ENCODE measurements at regions of chr2 and their contacts with region 1.

Region 1: DNA sequence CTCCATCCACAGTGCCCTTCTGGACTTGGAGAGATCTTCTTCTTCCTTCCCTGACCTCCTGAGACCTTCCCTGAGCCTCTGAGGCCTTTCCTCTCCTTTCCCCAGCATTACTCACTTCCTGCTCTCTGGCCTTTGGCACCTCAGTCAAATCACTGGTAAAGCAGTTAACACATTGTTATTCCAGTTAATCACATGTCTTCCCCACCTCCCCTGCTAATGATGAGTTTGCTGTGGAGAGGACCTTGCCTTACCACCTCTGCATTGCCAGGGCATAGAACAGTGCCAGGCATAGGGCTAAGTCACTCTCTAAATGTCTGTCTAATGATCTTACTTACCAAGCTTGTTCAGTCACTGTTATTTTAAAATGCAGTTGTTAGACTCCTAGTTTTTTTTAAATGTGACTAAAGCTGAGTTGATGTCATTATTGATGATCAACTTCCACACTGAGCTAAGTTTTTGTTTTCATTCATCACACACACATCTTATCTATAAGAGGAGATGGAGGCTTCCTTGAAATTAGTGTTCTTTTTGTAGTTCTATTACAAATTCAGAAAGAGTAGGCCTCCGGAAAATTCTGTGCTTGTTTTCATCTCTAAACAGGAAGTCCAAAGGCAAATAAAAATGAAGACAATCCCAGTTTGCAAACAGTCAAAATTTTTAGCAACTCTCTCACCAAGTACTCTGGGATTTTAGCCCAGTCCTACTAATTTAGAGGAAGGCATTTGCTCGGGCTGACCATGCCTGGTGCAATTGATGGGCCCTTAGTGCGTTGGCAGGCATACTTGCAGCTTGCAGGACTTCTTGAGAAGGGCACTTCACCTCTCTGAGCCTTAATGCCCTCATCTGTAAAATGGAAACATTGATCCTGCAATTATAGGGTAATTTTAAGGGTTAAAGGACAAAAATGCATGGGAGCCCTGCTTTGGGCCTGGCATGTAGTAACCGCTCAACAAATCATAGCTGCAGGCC is 113.7 kb upstream of the SPRED2 start:
- DNase-seq: no peak
- ATAC-seq: peak in 1 of 4 donors; percentile 61
- H3K4me3 ChIP-seq: no peak overlapping the region
- H3K27ac ChIP-seq: no peak overlapping the region
- H3K4me1 ChIP-seq: no peaks in the 10 kb centered on the region
- H3K27me3 ChIP-seq: no peaks in the 10 kb centered on the region
- CTCF ChIP-seq: no peak

Region 2: DNA sequence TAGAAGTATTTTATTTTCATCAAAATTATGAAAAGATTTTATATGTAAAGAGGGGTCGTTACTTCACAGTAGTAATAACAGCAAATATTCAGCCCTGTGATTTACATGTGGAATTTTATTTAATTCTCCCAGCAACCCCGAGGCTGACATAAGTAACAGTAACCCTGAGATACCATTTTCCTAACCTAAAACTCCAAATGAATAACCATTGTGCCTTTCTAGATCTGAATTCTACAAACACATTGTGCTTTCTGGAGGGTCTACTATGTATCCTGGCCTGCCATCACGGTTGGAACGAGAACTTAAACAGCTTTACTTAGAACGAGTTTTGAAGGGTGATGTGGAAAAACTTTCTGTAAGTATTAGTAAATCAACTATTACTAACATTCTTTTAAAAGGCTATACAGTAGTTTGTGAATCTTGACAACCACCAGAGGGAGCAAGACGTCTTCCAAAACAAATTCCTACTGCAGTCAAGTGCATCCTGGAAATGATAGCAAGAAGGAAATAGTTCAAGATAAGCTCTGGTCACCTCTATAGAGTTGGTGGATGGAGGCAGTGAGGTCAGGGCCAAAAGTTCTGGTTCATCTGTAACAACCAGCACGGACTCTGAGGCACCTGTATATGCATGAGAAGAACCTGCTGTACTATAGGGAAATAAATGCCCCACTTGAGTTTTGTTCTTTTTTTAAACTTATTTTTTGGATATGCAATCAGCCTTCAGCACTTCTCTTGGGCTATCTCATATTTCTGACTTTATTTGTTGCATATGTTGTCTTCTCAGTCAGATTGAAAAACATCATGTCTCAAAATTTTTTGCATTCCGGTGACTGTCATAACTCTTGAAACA is 281.1 kb before region 1 on chr2:
- intact Hi-C with region 1: loop called in 2 of 3 experiments (anchors 5 to 10 kb)
- DNase-seq: peak in 3 of 6 donors; percentile 24 to 49 (median 28)
- ATAC-seq: peak; percentile 87 to 91 (median 89)
- H3K4me3 ChIP-seq: no peak overlapping the region
- H3K27ac ChIP-seq: no peak overlapping the region
- H3K4me1 ChIP-seq: no peaks in the 10 kb centered on the region
- H3K27me3 ChIP-seq: no peaks in the 10 kb centered on the region
- CTCF ChIP-seq: peak in 3 of 4 donors; percentile 18 to 54 (median 49)

Measured in pancreas (tissue), 10 donors.